ENCODE measurements at regions of chr12 and their contacts with region 1.

Region 1: GRCh38 chr12:109656743-109657142 is 56.9 kb upstream of the FAM222A start:
- DNase-seq: no peak
- H3K4me3 ChIP-seq: no peak overlapping the region
- H3K27ac ChIP-seq: no peak overlapping the region
- H3K4me1 ChIP-seq: no peaks in the 10 kb centered on the region
- H3K27me3 ChIP-seq: no peaks in the 10 kb centered on the region
- CTCF ChIP-seq: no peak

Region 2: GRCh38 chr12:109544955-109545531 is 111.7 kb before region 1 on chr12:
- CTCF ChIA-PET with region 1: no interaction called
- dilution Hi-C with region 1: loop called (anchors 5 kb)
- in situ Hi-C with region 1: no loop called
- intact Hi-C with region 1: no loop called
- DNase-seq: peak; percentile 11
- H3K4me3 ChIP-seq: no peak overlapping the region
- H3K27ac ChIP-seq: no peak overlapping the region
- H3K4me1 ChIP-seq: peaks cover 25% of the 10 kb centered on the region
- H3K27me3 ChIP-seq: no peaks in the 10 kb centered on the region
- CTCF ChIP-seq: no peak

Region 3: DNA sequence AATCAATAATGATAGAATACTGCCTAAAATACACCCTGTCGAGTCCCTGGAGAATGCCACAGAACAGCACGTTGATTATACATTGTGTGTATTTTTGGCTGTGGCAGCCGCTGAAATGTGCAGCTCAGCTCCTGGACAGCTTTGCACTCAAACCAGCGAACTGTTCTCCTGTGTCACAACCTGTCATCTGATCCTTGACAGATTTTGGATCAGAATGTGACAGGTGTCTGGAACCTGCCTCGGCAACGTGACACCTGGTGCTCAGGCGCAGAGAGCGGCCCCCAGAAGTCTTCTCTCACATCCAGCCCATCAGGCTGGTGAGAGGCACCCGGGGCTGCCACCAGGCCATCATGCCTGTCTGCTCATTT is 63.9 kb before region 1 on chr12:
- CTCF ChIA-PET with region 1: no interaction called
- dilution Hi-C with region 1: no loop called
- in situ Hi-C with region 1: no loop called
- intact Hi-C with region 1: no loop called
- DNase-seq: no peak
- H3K4me3 ChIP-seq: no peak overlapping the region
- H3K27ac ChIP-seq: no peak overlapping the region
- H3K4me1 ChIP-seq: peaks cover 2% of the 10 kb centered on the region
- H3K27me3 ChIP-seq: no peaks in the 10 kb centered on the region
- CTCF ChIP-seq: no peak

Region 4: GRCh38 chr12:109612975-109613502 is 43.7 kb before region 1 on chr12:
- CTCF ChIA-PET with region 1: no interaction called
- dilution Hi-C with region 1: loop called (anchors 5 kb)
- in situ Hi-C with region 1: no loop called
- intact Hi-C with region 1: no loop called
- DNase-seq: peak; percentile 29
- H3K4me3 ChIP-seq: no peak overlapping the region
- H3K27ac ChIP-seq: no peak overlapping the region
- H3K4me1 ChIP-seq: peaks cover 2% of the 10 kb centered on the region
- H3K27me3 ChIP-seq: no peaks in the 10 kb centered on the region
- CTCF ChIP-seq: peak; percentile 39 to 41

Region 5: GRCh38 chr12:109706747-109707469 is 50.2 kb after region 1 on chr12:
- CTCF ChIA-PET with region 1: no interaction called
- dilution Hi-C with region 1: loop called (anchors 5 kb)
- in situ Hi-C with region 1: no loop called
- intact Hi-C with region 1: no loop called
- DNase-seq: no peak
- H3K4me3 ChIP-seq: no peak overlapping the region
- H3K27ac ChIP-seq: no peak overlapping the region
- H3K4me1 ChIP-seq: no peaks in the 10 kb centered on the region
- H3K27me3 ChIP-seq: peaks cover 1% of the 10 kb centered on the region
- CTCF ChIP-seq: no peak

Measured in mammary epithelial cell (primary cell).